ENCODE measurements at regions of chr2 and their contacts with region 1.

Region 1: DNA sequence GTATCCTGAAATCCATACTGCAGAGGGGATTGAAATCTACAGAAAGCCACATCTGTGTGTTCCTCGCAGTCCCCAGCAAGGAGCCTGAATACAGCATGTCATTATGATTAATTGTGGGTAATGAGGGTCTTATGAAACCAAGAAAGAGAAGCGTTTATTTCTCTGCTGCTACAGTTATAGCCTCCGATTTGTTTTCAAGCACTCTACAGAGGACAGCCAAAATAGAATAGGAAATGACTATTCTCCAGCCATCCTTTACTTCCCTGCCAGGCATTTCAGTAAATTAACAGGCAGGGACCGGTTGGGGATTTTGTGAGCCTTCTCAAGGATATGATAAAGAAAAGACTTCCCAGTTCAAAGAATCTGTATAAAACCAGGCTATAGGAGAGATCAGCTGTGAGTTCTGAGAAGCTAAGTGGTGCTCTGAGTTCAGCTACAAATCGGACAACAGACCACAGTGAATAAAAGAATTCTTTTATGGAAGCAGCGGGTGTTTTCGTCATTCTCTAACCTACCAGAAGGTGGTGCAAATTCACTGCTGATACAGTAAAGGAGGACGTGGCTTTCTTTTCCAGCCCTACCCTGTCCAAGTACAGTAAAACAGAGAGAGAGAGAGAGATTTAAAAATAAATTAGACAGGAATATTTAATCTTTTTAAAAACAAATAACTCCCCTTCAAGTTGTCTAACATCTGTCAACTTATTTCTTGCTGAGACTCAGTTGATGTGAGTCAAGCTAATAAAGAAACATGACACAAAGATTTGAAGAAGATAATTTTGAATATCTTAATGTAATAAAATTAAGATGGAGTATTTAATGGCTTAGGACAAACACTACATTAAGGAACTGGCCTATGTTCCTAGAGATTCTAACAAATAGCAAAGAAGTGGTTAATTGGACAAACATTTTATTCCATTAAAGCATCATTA is 133.7 kb downstream of the INSIG2 start:
- DNase-seq: peak; percentile 50
- CTCF ChIP-seq: peak; percentile 60

Region 2: GRCh38 chr2:118207889-118208288 is 14.0 kb before region 1 on chr2:
- CTCF ChIA-PET with region 1: interaction called, 28 read pairs
- POLR2A ChIA-PET with region 1: no interaction called
- DNase-seq: no peak
- CTCF ChIP-seq: no peak

Region 3: DNA sequence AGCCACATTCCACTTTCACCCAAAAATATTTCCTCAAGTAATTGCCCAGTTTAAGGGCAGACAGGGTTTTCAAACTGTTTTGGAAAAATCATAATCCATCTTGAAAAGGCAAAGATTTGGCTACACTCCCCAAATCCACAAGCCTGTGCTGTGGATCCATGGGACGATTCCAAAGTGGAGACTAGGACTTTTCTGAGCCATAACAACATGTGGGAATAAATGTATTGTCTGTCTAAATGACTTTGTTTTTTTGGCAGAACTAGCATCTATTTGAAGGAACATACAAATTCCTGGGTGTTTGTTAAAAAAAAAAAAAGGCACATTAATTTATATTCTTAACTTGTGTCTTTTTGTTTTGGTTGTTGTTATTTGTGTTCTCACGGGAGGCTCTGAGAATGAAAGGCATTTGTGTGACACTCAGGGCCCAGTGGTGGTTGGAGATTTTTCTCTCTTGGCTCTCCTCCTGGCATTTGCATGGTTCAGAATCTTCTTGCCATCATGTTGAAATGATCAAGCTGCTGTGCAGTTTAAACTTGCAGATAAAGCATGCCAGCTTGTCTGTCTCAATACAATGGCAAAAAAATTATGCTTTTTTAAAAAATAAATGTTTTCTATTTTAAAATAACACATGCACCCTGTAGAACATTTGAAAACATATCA is 348.1 kb after region 1 on chr2:
- CTCF ChIA-PET with region 1: no interaction called
- POLR2A ChIA-PET with region 1: no interaction called
- DNase-seq: no peak
- CTCF ChIP-seq: no peak

Region 4: GRCh38 chr2:118855451-118856279 is 633.7 kb after region 1 on chr2:
- CTCF ChIA-PET with region 1: interaction called, 49 read pairs
- POLR2A ChIA-PET with region 1: no interaction called
- DNase-seq: peak; percentile 90
- CTCF ChIP-seq: peak; percentile 94

Region 5: DNA sequence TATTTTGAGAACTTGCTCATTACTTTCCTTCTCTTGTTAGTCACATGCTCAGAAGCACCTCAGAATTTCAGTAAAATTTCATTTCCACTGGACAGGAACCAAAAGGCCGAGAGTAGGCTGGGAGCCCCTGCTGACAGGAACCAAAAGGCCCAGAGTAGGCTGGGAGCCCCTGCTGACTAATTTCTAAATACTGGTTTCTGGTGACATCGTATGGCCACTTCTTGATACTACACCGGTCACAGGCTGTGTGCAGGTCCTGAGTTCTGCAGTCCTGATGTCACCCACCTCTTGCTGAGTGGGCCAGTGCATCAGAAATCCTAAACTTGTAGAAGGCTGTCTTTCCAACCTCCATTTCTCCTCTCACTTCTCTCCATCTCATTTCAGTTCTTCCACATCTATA is 643.2 kb after region 1 on chr2:
- CTCF ChIA-PET with region 1: interaction called, 12 read pairs
- POLR2A ChIA-PET with region 1: no interaction called
- DNase-seq: peak; percentile 56
- CTCF ChIP-seq: peak; percentile 76

Measured in GM10248 (cell line).